B cell (primary cell): ENCODE measurements at regions of chr4 and their contacts with region 1.

Region 1: GRCh38 chr4:77095101-77095821 is 19.5 kb upstream of the CCNI start:
- DNase-seq: peak; percentile 81
- ATAC-seq: peak; percentile 99
- H3K4me3 ChIP-seq: no peak overlapping the region
- H3K4me3 Mint-ChIP-seq: no peak overlapping the region
- H3K27ac ChIP-seq: no peak overlapping the region
- H3K27ac Mint-ChIP-seq: no peak overlapping the region
- H3K4me1 ChIP-seq: peaks cover 21 to 25% of the 10 kb centered on the region in 2 donors
- H3K4me1 Mint-ChIP-seq: peaks cover 23% of the 10 kb centered on the region
- H3K27me3 ChIP-seq: no peaks in the 10 kb centered on the region
- H3K27me3 Mint-ChIP-seq: no peaks in the 10 kb centered on the region
- CTCF ChIP-seq: peak; percentile 95

Region 2: DNA sequence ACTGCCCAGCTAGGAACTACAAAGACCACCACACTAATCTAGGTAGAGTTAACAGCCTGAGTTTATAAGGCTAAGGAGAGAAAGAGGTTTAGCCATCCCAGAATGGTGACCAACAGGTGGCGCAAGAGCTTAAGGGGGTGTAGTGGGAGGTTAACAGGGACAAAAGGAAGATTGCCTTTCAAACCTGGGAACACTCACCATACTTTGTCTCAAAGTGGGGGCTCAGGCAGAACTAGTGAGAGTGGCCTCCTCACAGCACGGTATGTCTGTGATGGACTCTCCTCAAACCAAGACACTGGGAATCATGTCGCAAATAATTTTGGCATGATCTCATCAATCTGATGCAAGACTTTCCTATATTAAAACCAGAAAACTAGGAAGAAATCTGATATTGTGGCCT is 42.9 kb before region 1 on chr4:
- CTCF ChIA-PET with region 1: interaction called, 53 read pairs
- POLR2A ChIA-PET with region 1: no interaction called
- intact Hi-C with region 1: no loop called
- DNase-seq: peak; percentile 70
- ATAC-seq: no peak
- H3K4me3 ChIP-seq: no peak overlapping the region
- H3K4me3 Mint-ChIP-seq: no peak overlapping the region
- H3K27ac ChIP-seq: no peak overlapping the region
- H3K27ac Mint-ChIP-seq: peak overlapping the region; percentile 59
- H3K4me1 ChIP-seq: no peaks in the 10 kb centered on the region
- H3K4me1 Mint-ChIP-seq: no peaks in the 10 kb centered on the region
- H3K27me3 ChIP-seq: no peaks in the 10 kb centered on the region
- H3K27me3 Mint-ChIP-seq: no peaks in the 10 kb centered on the region
- CTCF ChIP-seq: peak; percentile 61

Region 3: GRCh38 chr4:77082886-77083608 is 12.2 kb before region 1 on chr4:
- CTCF ChIA-PET with region 1: interaction called, 54 read pairs
- POLR2A ChIA-PET with region 1: no interaction called
- intact Hi-C with region 1: no loop called
- DNase-seq: no peak
- ATAC-seq: no peak
- H3K4me3 ChIP-seq: no peak overlapping the region
- H3K4me3 Mint-ChIP-seq: no peak overlapping the region
- H3K27ac ChIP-seq: no peak overlapping the region
- H3K27ac Mint-ChIP-seq: no peak overlapping the region
- H3K4me1 ChIP-seq: peaks cover 3 to 9% of the 10 kb centered on the region in 2 donors
- H3K4me1 Mint-ChIP-seq: peaks cover 17% of the 10 kb centered on the region
- H3K27me3 ChIP-seq: no peaks in the 10 kb centered on the region
- H3K27me3 Mint-ChIP-seq: no peaks in the 10 kb centered on the region
- CTCF ChIP-seq: no peak

Region 4: GRCh38 chr4:77126809-77127208 is 31.5 kb after region 1 on chr4:
- CTCF ChIA-PET with region 1: interaction called, 109 read pairs
- POLR2A ChIA-PET with region 1: interaction called, 4 read pairs
- intact Hi-C with region 1: no loop called
- DNase-seq: peak; percentile 72
- ATAC-seq: peak; percentile 83
- H3K4me3 ChIP-seq: peak overlapping the region in 1 of 5 experiments; percentile 31
- H3K4me3 Mint-ChIP-seq: peak overlapping the region; percentile 59
- H3K27ac ChIP-seq: peak overlapping the region; percentile 81 to 90
- H3K27ac Mint-ChIP-seq: peak overlapping the region; percentile 96
- H3K4me1 ChIP-seq: peaks cover 52 to 66% of the 10 kb centered on the region in 2 donors
- H3K4me1 Mint-ChIP-seq: peaks cover 68% of the 10 kb centered on the region
- H3K27me3 ChIP-seq: no peaks in the 10 kb centered on the region
- H3K27me3 Mint-ChIP-seq: no peaks in the 10 kb centered on the region
- CTCF ChIP-seq: no peak

Region 5: DNA sequence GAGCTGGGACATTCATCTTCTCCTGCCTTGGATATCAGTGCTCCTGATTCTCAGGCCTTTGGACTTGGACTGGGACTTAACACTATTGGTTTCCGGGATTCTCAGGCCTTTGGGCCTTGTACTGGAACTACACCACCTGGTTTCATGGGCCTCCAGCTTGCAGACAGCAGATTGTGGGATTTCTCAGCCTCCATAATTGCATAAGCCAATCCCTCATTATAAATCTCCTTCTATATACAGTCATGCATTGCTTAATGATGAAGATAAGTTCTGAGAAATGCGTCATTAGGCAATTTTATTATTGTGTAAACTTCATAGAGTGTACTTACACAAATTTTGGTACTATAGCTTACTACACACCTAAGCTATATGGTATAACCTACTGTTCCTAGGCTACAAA is 52.8 kb after region 1 on chr4:
- CTCF ChIA-PET with region 1: interaction called, 72 read pairs
- POLR2A ChIA-PET with region 1: interaction called, 3 read pairs
- intact Hi-C with region 1: no loop called
- DNase-seq: no peak
- ATAC-seq: no peak
- H3K4me3 ChIP-seq: no peak overlapping the region
- H3K4me3 Mint-ChIP-seq: no peak overlapping the region
- H3K27ac ChIP-seq: no peak overlapping the region
- H3K27ac Mint-ChIP-seq: no peak overlapping the region
- H3K4me1 ChIP-seq: peaks cover 42 to 43% of the 10 kb centered on the region in 2 donors
- H3K4me1 Mint-ChIP-seq: peaks cover 47% of the 10 kb centered on the region
- H3K27me3 ChIP-seq: no peaks in the 10 kb centered on the region
- H3K27me3 Mint-ChIP-seq: no peaks in the 10 kb centered on the region
- CTCF ChIP-seq: no peak

Region 6: GRCh38 chr4:77332696-77333270 is 237.5 kb after region 1 on chr4:
- CTCF ChIA-PET with region 1: no interaction called
- POLR2A ChIA-PET with region 1: no interaction called
- intact Hi-C with region 1: no loop called
- DNase-seq: no peak
- ATAC-seq: no peak
- H3K4me3 ChIP-seq: no peak overlapping the region
- H3K4me3 Mint-ChIP-seq: no peak overlapping the region
- H3K27ac ChIP-seq: no peak overlapping the region
- H3K27ac Mint-ChIP-seq: no peak overlapping the region
- H3K4me1 ChIP-seq: no peaks in the 10 kb centered on the region
- H3K4me1 Mint-ChIP-seq: no peaks in the 10 kb centered on the region
- H3K27me3 ChIP-seq: peaks cover 0 to 5% (median 0%) of the 10 kb centered on the region in 4 experiments
- H3K27me3 Mint-ChIP-seq: peaks cover under 1% of the 10 kb centered on the region
- CTCF ChIP-seq: no peak